ENCODE measurements at regions of chr17 and their contacts with region 1.

Region 1: GRCh38 chr17:7767405-7768021 is 50.0 kb downstream of the DNAH2 start:
- DNase-seq: peak; percentile 30
- H3K4me3 ChIP-seq: no peak overlapping the region
- H3K27ac ChIP-seq: no peak overlapping the region
- H3K27me3 ChIP-seq: peaks cover 10% of the 10 kb centered on the region
- CTCF ChIP-seq: no peak

Region 2: GRCh38 chr17:7755095-7755890 is 12.2 kb before region 1 on chr17:
- CTCF ChIA-PET with region 1: no interaction called
- POLR2A ChIA-PET with region 1: no interaction called
- DNase-seq: no peak
- H3K4me3 ChIP-seq: no peak overlapping the region
- H3K27ac ChIP-seq: no peak overlapping the region
- H3K27me3 ChIP-seq: no peaks in the 10 kb centered on the region
- CTCF ChIP-seq: no peak

Region 3: GRCh38 chr17:7803981-7804380 is 36.5 kb after region 1 on chr17:
- CTCF ChIA-PET with region 1: interaction called, 10 read pairs
- POLR2A ChIA-PET with region 1: interaction called, 4 read pairs
- DNase-seq: no peak
- H3K4me3 ChIP-seq: no peak overlapping the region
- H3K27ac ChIP-seq: no peak overlapping the region
- H3K27me3 ChIP-seq: peaks cover 6% of the 10 kb centered on the region
- CTCF ChIP-seq: no peak